ENCODE measurements at regions of chrX and their contacts with region 1.

Region 1: GRCh38 chrX:65581661-65582339 is 47.2 kb upstream of the LAS1L start:
- DNase-seq: peak; percentile 60
- H3K4me3 Mint-ChIP-seq: no peak overlapping the region
- H3K27ac Mint-ChIP-seq: no peak overlapping the region
- H3K4me1 Mint-ChIP-seq: peaks cover 8% of the 10 kb centered on the region
- H3K27me3 Mint-ChIP-seq: peaks cover 27% of the 10 kb centered on the region
- CTCF ChIP-seq: peak; percentile 38

Region 2: DNA sequence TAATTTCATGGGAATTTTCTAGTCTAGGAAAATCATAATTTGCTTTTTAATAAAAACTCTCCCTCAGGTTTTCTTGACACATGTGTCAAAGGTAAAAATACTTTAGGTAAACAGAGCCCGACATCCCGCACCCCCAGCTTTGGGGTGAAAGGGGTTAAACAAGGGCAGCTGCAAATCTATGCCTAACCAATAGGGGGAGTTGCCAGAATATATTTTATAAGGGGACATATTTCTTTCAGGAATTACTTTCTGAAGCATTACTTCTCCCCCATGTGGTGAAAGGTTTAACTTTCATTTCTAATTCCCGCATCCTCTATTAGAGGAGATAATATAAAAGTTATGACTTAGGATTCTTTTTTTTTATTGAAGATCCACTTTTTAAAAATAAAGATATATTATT is 528.3 kb after region 1 on chrX:
- CTCF ChIA-PET with region 1: no interaction called
- intact Hi-C with region 1: loop called (anchors 1 kb)
- DNase-seq: no peak
- H3K4me3 Mint-ChIP-seq: no peak overlapping the region
- H3K27ac Mint-ChIP-seq: no peak overlapping the region
- H3K4me1 Mint-ChIP-seq: no peaks in the 10 kb centered on the region
- H3K27me3 Mint-ChIP-seq: no peaks in the 10 kb centered on the region
- CTCF ChIP-seq: no peak

Region 3: DNA sequence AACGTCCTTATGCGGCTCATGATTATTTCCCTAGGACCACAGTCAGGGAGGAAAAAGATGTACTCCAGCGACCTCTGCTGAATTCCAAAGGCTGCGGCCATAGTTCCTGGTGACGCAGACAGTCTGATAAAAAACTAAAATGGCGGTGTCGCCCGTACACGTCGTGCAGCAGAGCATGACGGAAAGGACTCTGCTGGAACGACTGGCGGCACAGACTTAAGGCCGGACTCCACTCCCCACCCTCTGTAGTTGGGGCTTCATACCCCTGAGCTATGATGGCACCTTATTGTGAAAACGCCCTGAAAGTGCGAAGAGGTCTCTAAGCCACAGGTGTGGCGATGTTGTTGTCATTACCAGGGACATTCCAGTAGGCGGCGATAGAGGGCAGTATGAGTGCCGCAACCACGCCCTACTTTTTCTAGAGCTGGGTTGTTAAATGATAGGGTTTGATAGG is 1147.0 kb after region 1 on chrX:
- CTCF ChIA-PET with region 1: no interaction called
- intact Hi-C with region 1: loop called (anchors 5 kb)
- DNase-seq: peak; percentile 23
- H3K4me3 Mint-ChIP-seq: peak overlapping the region; percentile 21
- H3K27ac Mint-ChIP-seq: no peak overlapping the region
- H3K4me1 Mint-ChIP-seq: no peaks in the 10 kb centered on the region
- H3K27me3 Mint-ChIP-seq: no peaks in the 10 kb centered on the region
- CTCF ChIP-seq: peak; percentile 26

Measured in Calu3 (cell line).